CD4-positive, alpha-beta memory T cell (primary cell): ENCODE measurements at regions of chr10 and their contacts with region 1.

Region 1: DNA sequence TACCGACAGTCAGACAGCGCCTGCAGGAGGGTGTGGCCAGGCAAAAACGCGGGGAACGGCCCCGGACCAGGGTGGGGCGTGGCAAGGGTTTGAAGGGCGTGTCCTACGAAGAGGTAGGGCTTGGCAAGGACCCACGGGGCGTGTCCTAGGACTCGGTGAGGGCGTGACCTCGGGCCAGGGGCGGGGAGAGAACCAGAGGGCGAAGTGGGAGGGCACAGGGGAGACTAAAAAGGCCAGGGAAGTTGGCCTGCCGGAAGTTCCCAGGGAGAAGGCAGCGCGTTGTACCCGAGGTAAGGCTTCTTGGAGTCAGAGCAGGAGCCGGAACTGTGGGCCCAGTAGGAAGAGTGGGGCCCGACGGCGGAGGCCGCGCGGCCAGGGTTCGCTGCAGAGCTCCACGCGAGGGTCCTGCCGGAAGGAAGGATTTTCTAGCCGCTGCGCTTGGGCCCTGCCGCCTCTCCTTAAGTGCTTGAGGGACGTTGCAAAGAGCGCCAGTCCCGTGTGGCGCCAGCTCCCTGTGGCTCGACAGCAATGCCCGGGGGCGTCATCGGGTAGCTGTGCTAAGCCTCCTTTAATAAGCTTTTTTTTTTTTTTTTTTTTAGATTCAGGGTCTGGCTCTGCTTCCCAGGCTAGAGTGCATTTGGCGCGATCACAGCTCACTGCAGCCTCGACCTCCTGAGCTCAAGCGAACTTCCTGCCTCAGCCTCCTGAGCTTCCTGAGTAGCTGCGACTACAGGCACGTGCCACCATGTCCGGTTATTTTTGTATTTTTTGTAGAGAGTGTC is at the start of gene PTER:
- DNase-seq: peak; percentile 94 to 96 (median 95)
- H3K4me3 ChIP-seq: peak within 1 kb of the TSS; percentile 63 to 65
- H3K4me3 Mint-ChIP-seq: peak within 1 kb of the TSS; percentile 88 to 97 (median 93)
- H3K27ac ChIP-seq: peak within 1 kb of the TSS; percentile 65
- H3K27ac Mint-ChIP-seq: peak within 1 kb of the TSS; percentile 85 to 96 (median 95)
- H3K4me1 ChIP-seq: peaks cover 52% of the 10 kb centered on the region
- H3K4me1 Mint-ChIP-seq: peaks cover 35 to 58% (median 48%) of the 10 kb centered on the region in 4 donors
- H3K27me3 ChIP-seq: no peaks in the 10 kb centered on the region
- H3K27me3 Mint-ChIP-seq: no peaks in the 10 kb centered on the region
- total RNA-seq, gene PTER: 24.1 to 26.5 TPM

Region 2: DNA sequence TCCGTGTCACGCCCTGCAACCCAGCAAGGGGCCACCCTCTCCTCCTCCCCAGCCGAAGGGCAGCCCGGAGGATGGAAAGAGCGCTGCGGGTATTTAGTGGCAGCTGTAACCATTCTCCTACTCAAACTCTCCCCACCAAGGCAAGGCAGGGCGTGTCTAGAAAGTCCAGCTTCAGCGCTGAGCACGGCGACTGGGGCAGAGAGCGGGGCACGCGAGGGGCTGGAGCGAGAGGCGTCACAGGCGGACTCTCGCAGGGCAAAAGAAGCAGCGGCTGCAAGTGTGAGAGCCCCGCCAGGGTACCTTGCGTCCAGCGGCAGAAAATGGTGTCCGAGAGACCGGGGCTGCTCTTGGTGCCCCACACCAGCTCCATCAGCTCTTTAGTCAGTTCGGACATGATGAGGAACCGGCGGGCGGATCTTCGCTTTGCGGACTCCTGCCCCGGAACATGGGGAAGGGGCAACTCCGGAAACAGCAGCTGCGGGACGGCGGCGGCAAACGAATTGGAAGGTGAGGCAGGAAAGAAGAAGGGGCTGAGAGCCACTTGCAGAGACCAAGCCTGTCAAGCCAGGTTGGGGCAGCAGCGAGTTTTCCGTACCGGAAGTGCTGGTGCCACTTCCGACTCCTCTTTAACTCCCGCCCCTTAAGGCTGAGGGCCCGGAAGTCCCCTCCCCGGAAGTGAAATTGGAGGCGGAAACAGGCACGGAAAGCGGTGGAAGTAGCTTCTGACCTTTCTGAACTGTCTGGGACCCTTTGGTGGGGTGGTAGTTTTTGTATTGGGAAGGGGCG is 576.9 kb before region 1 on chr10 and contains the start of gene MINDY3:
- CTCF ChIA-PET with region 1: no interaction called
- POLR2A ChIA-PET with region 1: interaction called, 9 read pairs
- intact Hi-C with region 1: loop called (anchors 1 kb)
- DNase-seq: peak; percentile 79 to 84 (median 81)
- H3K4me3 ChIP-seq: peak within 1 kb of the TSS; percentile 87 to 99
- H3K4me3 Mint-ChIP-seq: peak within 1 kb of the TSS; percentile 94 to 99 (median 98)
- H3K27ac ChIP-seq: peak within 1 kb of the TSS; percentile 67
- H3K27ac Mint-ChIP-seq: peak within 1 kb of the TSS; percentile 90 to 96 (median 93)
- H3K4me1 ChIP-seq: peaks cover 42% of the 10 kb centered on the region
- H3K4me1 Mint-ChIP-seq: peaks cover 29 to 49% (median 38%) of the 10 kb centered on the region in 4 donors
- H3K27me3 ChIP-seq: no peaks in the 10 kb centered on the region
- H3K27me3 Mint-ChIP-seq: peaks cover 7 to 8% of the 10 kb centered on the region in 2 donors
- total RNA-seq, gene MINDY3: 35.8 to 40.4 TPM

Region 3: GRCh38 chr10:15960277-15960676 is 476.7 kb before region 1 on chr10:
- CTCF ChIA-PET with region 1: no interaction called
- POLR2A ChIA-PET with region 1: no interaction called
- intact Hi-C with region 1: no loop called
- DNase-seq: no peak
- H3K4me3 ChIP-seq: no peak overlapping the region
- H3K4me3 Mint-ChIP-seq: no peak overlapping the region
- H3K27ac ChIP-seq: no peak overlapping the region
- H3K27ac Mint-ChIP-seq: no peak overlapping the region
- H3K4me1 ChIP-seq: no peaks in the 10 kb centered on the region
- H3K4me1 Mint-ChIP-seq: no peaks in the 10 kb centered on the region
- H3K27me3 ChIP-seq: no peaks in the 10 kb centered on the region
- H3K27me3 Mint-ChIP-seq: peaks cover 1 to 10% of the 10 kb centered on the region in 2 donors

Region 4: DNA sequence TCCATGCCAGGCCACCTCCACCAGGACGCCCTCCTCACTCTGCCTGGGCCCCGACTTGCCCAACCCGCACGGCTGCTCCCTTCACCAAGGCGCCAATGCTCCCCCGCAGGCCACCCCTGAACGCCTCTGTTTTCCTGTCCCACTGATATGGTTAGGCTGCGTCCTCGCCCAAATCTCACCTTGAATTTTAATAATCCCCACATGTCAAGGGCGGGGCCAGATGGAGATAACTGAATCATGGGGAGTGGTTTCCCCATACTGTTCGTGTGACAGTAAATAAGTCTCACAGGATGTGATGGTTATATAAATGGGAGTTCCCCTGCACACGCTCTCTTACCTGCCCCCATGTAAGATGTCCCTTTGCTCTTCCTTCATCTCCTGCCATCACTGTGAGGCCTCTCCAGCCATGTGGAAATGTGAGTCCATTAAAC is 350.4 kb after region 1 on chr10:
- CTCF ChIA-PET with region 1: no interaction called
- POLR2A ChIA-PET with region 1: no interaction called
- intact Hi-C with region 1: loop called (anchors 1 kb)
- DNase-seq: peak; percentile 78 to 91 (median 83)
- H3K4me3 ChIP-seq: no peak overlapping the region
- H3K4me3 Mint-ChIP-seq: peak overlapping the region; percentile 51 to 78 (median 66)
- H3K27ac ChIP-seq: peak overlapping the region; percentile 76
- H3K27ac Mint-ChIP-seq: peak overlapping the region; percentile 87 to 100 (median 99)
- H3K4me1 ChIP-seq: peaks cover 28% of the 10 kb centered on the region
- H3K4me1 Mint-ChIP-seq: peaks cover 26 to 48% (median 31%) of the 10 kb centered on the region in 4 donors
- H3K27me3 ChIP-seq: no peaks in the 10 kb centered on the region
- H3K27me3 Mint-ChIP-seq: no peaks in the 10 kb centered on the region

Region 5: DNA sequence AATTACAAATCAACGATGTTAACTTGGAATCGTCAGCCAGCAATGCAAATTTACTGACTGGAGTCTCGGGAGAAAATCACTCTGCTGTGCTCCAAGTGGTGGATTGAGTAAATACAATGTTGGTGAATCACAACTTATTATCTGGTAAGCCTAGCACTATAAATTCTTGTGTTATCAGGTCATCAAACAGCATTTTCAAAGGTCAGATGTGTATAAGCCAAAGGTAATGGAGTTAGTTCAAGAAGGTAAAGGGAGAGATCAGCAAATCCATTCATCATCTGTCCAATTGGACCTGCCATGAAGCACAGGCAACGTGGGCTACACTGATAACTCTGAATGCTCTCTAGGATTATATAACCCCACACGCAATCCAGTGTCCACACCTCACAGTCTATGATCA is 678.7 kb after region 1 on chr10:
- CTCF ChIA-PET with region 1: no interaction called
- POLR2A ChIA-PET with region 1: no interaction called
- intact Hi-C with region 1: loop called (anchors 5 kb)
- DNase-seq: no peak
- H3K4me3 ChIP-seq: no peak overlapping the region
- H3K4me3 Mint-ChIP-seq: no peak overlapping the region
- H3K27ac ChIP-seq: no peak overlapping the region
- H3K27ac Mint-ChIP-seq: peak overlapping the region in 1 of 7 donors; percentile 54
- H3K4me1 ChIP-seq: peaks cover 4% of the 10 kb centered on the region
- H3K4me1 Mint-ChIP-seq: peaks cover 3 to 15% (median 10%) of the 10 kb centered on the region in 4 donors
- H3K27me3 ChIP-seq: no peaks in the 10 kb centered on the region
- H3K27me3 Mint-ChIP-seq: no peaks in the 10 kb centered on the region